HepG2 (cell line): ENCODE measurements at regions of chr18 and their contacts with region 1.

Region 1: DNA sequence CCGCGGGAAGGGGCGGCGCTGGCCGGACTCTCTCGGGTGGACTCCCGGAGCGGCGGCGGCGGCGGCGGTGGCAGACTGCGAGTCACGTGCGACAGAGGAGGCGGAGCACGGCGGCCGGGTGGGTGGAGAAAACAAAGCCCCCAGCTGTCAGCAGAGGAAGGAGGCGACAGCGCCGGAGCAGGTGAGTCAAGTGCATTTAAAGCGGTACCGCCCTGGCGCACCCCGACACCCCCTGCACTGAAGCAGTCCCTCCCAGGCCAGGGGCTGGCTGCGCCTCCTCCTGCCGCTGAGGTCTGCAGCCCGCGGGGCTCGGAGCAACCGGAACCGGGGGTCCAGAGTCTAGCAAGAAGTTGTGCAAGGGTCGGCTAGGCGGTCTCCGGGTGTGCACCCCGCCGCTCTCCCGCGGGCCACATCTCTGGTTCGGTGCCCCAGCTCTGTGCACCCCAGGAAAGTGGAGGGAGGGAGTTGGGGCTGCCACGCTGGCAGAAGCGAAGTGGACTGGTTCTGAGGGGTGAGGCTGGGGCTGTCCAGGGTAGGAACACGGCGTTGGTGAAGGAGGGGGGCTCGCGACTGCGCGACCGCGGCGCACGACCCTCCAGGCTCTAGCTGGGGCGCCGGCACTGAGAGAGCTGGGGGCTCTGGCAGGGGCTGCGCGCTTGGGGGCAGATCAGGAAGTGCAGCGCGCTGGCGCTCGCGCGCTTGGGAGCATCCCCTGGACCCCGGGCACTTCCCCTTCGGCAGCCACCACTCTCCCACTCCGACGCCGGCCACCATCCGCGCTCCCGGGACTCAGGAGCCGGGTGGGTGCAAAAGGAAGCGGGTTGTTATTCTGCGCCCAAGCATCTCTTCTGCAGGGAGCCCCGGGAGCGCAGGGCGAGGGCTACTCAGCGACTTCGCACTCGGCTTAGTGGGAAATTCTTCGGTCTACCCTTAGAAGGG is 64.0 kb upstream of the MAPRE2 start:
- DNase-seq: peak; percentile 70
- ATAC-seq: peak; percentile 67
- H3K4me3 ChIP-seq: peak overlapping the region; percentile 71 to 98 (median 97)
- H3K27ac ChIP-seq: peak overlapping the region; percentile 73
- H3K4me1 ChIP-seq: peaks cover 32% of the 10 kb centered on the region
- H3K27me3 ChIP-seq: no peaks in the 10 kb centered on the region; a peak in 1 of 5 replicates
- CTCF ChIP-seq: no peak; the same call in none of the 2 replicates
- EP300 ChIP-seq: peak in 1 of 2 experiments; percentile 31; a peak in 1 of 4 replicates
- POLR2A ChIP-seq: no peak; a peak in 2 of 4 replicates
- RAD21 ChIP-seq: no peak

Region 2: DNA sequence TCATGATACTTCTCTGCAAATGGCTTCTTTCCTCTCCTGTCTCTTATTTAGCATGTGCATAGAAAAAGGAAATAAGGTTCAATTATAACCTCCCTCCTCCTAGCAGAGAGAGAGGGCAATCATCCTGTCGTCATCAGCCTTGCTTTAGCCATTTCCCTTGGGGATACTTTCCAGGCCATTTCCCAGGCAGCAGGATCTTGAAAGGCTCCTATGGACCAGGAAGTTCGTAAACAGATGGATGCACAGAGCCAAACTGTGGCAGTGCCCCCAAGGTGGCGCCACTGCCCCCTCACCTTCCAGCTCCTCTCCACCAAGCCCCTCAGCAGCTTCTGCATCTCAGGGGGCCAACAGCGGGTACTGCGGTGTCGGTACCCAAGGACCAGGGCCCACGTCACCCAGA is 109.6 kb before region 1 on chr18:
- CTCF ChIA-PET with region 1: no interaction called
- POLR2A ChIA-PET with region 1: no interaction called
- in situ Hi-C with region 1: loop called (anchors 5 kb)
- intact Hi-C with region 1: loop called (anchors 5 kb)
- DNase-seq: peak; percentile 12
- ATAC-seq: peak; percentile 76
- H3K4me3 ChIP-seq: no peak overlapping the region
- H3K27ac ChIP-seq: no peak overlapping the region
- H3K4me1 ChIP-seq: no peaks in the 10 kb centered on the region
- H3K27me3 ChIP-seq: no peaks in the 10 kb centered on the region
- CTCF ChIP-seq: peak; percentile 68
- EP300 ChIP-seq: no peak
- POLR2A ChIP-seq: no peak
- RAD21 ChIP-seq: 0 out of 2 replicates have a peak, but pooled peaks have one; percentile 17

Region 3: DNA sequence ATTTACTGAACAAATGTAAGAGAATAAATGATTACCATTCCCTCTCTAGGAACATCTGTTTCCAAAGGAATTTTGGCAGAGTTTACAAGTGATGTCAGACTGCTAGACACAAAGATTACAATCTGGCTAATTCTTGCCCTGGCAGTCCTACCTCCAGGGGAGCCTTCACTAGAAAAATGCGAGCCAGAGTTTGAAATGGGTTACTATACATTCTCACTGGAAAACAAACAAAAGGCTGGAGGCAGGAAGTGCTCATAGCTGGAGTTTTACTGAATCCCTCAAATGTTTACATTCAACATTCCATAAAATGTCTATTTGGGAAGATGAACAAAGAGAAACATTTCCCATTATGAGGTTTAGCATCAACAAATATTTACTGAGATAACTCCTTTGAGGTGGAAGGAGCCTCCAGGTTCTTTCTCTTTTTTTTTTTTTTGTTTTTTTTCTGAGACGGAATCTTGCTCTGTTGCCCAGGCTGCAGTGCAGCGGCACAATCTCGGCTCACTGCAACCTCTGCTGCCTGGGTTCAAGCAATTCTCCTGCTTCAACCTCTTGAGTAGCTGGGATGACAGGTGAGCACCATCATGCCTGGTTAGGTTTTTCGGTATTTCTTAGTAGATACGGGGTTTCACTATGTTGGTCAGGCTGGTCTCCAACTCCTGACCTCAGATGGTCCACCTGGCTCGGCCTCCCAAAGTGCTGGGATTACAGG is 65.0 kb before region 1 on chr18:
- CTCF ChIA-PET with region 1: no interaction called
- POLR2A ChIA-PET with region 1: interaction called, 3 read pairs
- in situ Hi-C with region 1: loop called (anchors 5 kb)
- intact Hi-C with region 1: loop called (anchors 1 kb)
- DNase-seq: peak; percentile 95
- ATAC-seq: peak; percentile 91
- H3K4me3 ChIP-seq: no peak overlapping the region
- H3K27ac ChIP-seq: peak overlapping the region; percentile 60
- H3K4me1 ChIP-seq: peaks cover 63% of the 10 kb centered on the region
- H3K27me3 ChIP-seq: no peaks in the 10 kb centered on the region
- CTCF ChIP-seq: no peak
- EP300 ChIP-seq: peak in 1 of 2 experiments; percentile 87; a peak in 2 of 4 replicates
- POLR2A ChIP-seq: no peak
- RAD21 ChIP-seq: no peak; the same call in 1 of the 2 replicates

Region 4: DNA sequence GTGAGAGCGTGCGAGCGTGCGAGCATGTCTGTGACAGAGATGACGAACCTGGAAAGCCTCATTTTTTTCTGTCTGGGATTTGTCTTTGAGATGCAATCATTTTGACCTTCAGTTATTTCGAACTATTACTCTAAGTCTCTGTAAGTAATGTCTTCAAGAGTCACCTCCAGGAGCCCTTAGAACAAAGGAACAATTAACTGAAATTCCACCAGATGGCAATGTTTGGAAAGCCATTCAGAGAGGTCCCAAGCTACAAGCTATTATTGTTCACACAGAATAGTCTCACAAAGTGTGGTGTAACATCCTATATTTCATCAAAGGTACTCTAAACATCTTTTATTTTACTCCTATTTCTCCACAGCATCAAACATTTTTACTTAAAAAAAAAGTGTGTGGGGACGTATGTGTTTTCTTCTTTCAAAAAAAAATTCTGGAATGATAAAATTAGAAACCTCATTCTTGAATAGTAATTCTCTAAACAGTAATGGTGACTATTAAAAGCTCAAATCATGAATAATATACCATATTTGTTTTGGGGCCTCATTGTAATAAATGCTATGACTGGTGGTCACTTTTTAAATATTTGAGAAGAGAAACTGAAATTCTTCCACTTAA is 28.9 kb after region 1 on chr18:
- CTCF ChIA-PET with region 1: no interaction called
- POLR2A ChIA-PET with region 1: no interaction called
- in situ Hi-C with region 1: no loop called
- intact Hi-C with region 1: loop called (anchors 1 kb)
- DNase-seq: peak; percentile 60
- ATAC-seq: peak; percentile 83
- H3K4me3 ChIP-seq: no peak overlapping the region
- H3K27ac ChIP-seq: no peak overlapping the region
- H3K4me1 ChIP-seq: 0 out of 2 replicates have a peak, but pooled peaks cover 5% of the 10 kb centered on the region
- H3K27me3 ChIP-seq: no peaks in the 10 kb centered on the region
- CTCF ChIP-seq: peak; percentile 76
- EP300 ChIP-seq: no peak
- POLR2A ChIP-seq: no peak
- RAD21 ChIP-seq: peak; percentile 73

Region 5: DNA sequence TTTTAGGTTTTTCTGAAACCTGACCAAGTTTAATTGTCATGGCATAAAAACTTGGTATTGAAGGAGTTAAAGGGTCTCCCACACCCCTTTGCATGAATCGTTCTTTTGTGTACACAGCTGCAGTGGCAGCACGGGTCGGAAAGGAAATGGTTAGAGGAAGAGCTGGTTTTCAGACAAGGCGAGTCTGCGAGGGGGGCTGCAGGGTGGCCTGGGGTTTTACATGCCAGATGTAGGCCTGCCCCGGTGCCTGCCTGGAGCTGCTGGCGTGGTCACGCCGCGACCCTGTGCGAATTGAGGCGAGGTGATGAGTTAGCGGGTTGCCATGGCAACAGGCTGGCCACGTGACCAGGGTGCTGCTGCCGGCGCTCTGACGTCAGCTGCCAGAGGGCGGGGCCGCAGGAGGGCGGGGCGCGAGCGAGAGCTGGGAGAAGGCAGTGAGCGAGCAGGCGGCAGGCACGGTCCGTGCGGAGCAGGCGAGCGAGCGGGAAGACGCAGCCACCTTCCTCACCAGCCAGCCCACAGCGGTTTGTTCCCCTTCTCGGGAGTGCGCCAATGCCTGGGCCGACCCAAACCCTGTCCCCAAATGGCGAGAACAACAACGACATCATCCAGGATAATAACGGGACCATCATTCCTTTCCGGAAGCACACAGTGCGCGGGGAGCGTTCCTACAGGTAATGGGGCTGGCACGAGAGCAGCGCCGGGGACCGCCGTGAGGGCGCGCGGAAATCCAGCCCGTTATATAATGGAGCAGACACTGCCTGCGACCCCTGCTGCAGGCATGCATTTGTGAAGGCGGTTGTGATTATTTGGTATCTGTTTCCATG is 64.0 kb after region 1 on chr18 and contains the start of gene MAPRE2:
- CTCF ChIA-PET with region 1: no interaction called
- POLR2A ChIA-PET with region 1: interaction called, 4 read pairs
- in situ Hi-C with region 1: no loop called
- intact Hi-C with region 1: loop called (anchors 5 kb)
- DNase-seq: peak; percentile 89
- ATAC-seq: peak; percentile 97
- H3K4me3 ChIP-seq: peak within 1 kb of the TSS; percentile 74 to 84 (median 83)
- H3K27ac ChIP-seq: peak within 1 kb of the TSS; percentile 71
- H3K4me1 ChIP-seq: peaks cover 49% of the 10 kb centered on the region
- H3K27me3 ChIP-seq: no peaks in the 10 kb centered on the region
- CTCF ChIP-seq: 0 out of 2 replicates have a peak, but pooled peaks have one; percentile 26
- EP300 ChIP-seq: peak in 1 of 2 experiments; percentile 0; a peak in 1 of 4 replicates
- POLR2A ChIP-seq: peak; percentile 96 to 99
- RAD21 ChIP-seq: 0 out of 2 replicates have a peak, but pooled peaks have one; percentile 39
- total RNA-seq, gene MAPRE2: 34.5 and 59.9 TPM in 2 replicates

Region 6: GRCh38 chr18:35117951-35118411 is 140.8 kb after region 1 on chr18:
- CTCF ChIA-PET with region 1: no interaction called
- POLR2A ChIA-PET with region 1: no interaction called
- in situ Hi-C with region 1: no loop called
- intact Hi-C with region 1: no loop called
- DNase-seq: no peak
- ATAC-seq: no peak
- H3K4me3 ChIP-seq: no peak overlapping the region
- H3K27ac ChIP-seq: no peak overlapping the region
- H3K4me1 ChIP-seq: no peaks in the 10 kb centered on the region
- H3K27me3 ChIP-seq: no peaks in the 10 kb centered on the region
- CTCF ChIP-seq: no peak
- EP300 ChIP-seq: no peak
- POLR2A ChIP-seq: no peak
- RAD21 ChIP-seq: no peak

Region 7: GRCh38 chr18:35311476-35311875 is 334.3 kb after region 1 on chr18:
- CTCF ChIA-PET with region 1: no interaction called
- POLR2A ChIA-PET with region 1: no interaction called
- in situ Hi-C with region 1: no loop called
- intact Hi-C with region 1: no loop called
- DNase-seq: no peak
- ATAC-seq: no peak
- H3K4me3 ChIP-seq: no peak overlapping the region
- H3K27ac ChIP-seq: no peak overlapping the region
- H3K4me1 ChIP-seq: no peaks in the 10 kb centered on the region
- H3K27me3 ChIP-seq: no peaks in the 10 kb centered on the region
- CTCF ChIP-seq: no peak
- EP300 ChIP-seq: no peak
- POLR2A ChIP-seq: no peak
- RAD21 ChIP-seq: no peak